BJ (cell line): ENCODE measurements at regions of chr9 and their contacts with region 1.

Region 1: GRCh38 chr9:72256931-72257330 is 107.7 kb downstream of the GDA start:
- DNase-seq: no peak
- H3K4me3 ChIP-seq: no peak overlapping the region
- H3K27me3 ChIP-seq: no peaks in the 10 kb centered on the region
- CTCF ChIP-seq: no peak

Region 2: GRCh38 chr9:72089451-72090130 is 167.3 kb before region 1 on chr9:
- CTCF ChIA-PET with region 1: no interaction called
- POLR2A ChIA-PET with region 1: no interaction called
- DNase-seq: no peak
- H3K4me3 ChIP-seq: no peak overlapping the region
- H3K27me3 ChIP-seq: no peaks in the 10 kb centered on the region
- CTCF ChIP-seq: no peak

Region 3: DNA sequence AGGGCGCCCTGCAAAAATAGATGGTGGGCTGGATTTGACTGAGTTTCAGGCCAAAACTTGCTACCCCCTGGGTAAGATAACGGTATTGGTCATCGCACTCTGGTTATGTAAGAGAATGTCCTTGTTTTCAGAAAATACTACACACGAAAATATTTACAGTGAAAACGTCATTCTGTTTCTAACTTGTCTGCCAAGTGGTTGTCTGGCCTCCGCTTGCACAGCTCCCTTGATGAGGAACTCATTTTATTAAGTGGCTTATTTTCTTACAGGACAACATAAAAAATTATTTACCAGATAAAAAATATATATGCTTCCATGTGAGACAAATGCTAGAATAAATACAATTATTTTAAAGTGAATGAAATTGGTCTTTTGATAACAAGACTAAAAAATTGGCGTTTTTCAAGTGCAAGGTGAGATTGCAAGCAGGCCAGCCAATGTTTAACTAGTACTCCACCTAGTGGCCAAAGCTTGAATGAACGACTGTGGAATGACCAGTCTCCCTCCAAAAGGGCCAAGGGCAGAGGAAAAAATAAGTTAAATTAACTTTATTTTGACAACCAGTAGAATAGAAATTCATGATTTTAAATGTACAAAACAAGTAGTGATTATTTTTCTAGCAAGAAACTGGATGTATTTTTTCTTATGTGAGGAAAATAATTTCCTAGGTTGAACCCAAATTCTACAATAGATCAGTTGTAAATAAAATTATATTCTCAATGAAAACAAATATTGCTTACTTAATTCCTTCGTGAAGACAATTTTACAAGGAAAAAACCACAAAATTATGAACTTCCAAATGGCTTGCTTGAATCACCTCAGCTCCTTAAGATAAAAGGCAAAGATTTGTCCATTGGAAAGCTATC is 14.9 kb after region 1 on chr9:
- CTCF ChIA-PET with region 1: interaction called, 21 read pairs
- POLR2A ChIA-PET with region 1: no interaction called
- DNase-seq: no peak
- H3K4me3 ChIP-seq: no peak overlapping the region
- H3K27me3 ChIP-seq: peaks cover 2% of the 10 kb centered on the region
- CTCF ChIP-seq: peak; percentile 77